Lower leg skin (tissue), 4 donors: ENCODE measurements at regions of chr15 and their contacts with region 1.

Region 1: GRCh38 chr15:22855791-22856190 is 17.3 kb downstream of the NIPA2 start:
- DNase-seq: no peak
- H3K4me3 ChIP-seq: no peak overlapping the region
- CTCF ChIP-seq: no peak
- POLR2A ChIP-seq: no peak

Region 2: DNA sequence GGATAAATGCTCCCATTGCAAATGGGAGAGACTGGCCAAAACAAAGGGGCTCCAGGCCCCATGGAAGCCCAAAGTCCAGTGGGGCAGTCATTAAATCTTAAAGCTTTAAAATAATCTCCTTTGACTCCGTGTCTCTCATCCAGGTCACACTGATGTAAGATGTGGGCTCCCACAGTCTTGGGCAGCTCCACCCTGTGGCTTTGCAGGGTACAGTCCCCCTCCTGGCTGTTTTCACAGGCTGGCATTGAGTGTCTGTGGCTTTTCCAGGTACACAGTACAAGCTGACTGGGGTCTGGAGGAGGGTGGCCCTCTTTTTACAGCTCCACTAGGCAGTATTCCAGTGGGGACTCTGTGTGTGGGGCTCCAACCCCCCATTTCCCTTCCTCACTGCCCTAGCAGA is 28.6 kb after region 1 on chr15:
- intact Hi-C with region 1: no loop called
- DNase-seq: no peak
- H3K4me3 ChIP-seq: no peak overlapping the region
- CTCF ChIP-seq: no peak
- POLR2A ChIP-seq: no peak

Region 3: DNA sequence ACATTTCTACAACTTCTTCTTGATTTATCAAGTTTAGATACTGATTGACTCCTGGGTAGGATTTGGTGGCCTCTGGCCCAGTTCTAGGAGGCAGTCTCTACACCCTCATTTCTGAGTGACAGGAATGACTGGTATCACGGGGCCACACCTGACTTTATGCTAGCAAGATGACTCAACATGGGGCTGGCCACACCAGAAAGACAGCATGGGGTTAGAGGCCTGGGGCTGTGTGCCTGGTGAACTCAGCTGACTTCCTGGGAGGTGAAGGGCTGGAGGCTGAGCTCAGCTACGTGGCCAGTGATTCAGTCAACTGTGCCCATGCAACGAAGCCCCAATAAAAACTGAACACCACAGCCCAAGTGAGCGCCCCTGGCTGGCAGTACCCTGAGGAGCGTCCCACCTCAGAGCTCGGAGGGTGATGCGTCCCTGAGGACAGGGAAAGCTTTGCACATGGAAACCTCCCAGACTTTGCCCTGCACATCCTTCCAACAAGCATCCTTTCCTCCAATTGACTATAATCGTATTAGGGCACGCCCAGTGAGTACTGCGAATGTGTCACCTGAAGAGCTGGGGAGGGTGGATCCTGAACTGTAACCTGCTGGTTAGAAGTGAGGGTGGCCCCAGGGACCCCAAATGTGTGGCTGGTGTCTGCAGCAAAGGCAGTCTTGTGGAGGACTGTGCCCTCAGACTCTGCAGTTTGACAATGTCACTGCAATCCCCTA is 39.8 kb after region 1 on chr15:
- intact Hi-C with region 1: loop called (anchors 1 kb)
- DNase-seq: peak in 1 of 2 donors; percentile 41
- H3K4me3 ChIP-seq: no peak overlapping the region
- CTCF ChIP-seq: no peak
- POLR2A ChIP-seq: no peak

Region 4: DNA sequence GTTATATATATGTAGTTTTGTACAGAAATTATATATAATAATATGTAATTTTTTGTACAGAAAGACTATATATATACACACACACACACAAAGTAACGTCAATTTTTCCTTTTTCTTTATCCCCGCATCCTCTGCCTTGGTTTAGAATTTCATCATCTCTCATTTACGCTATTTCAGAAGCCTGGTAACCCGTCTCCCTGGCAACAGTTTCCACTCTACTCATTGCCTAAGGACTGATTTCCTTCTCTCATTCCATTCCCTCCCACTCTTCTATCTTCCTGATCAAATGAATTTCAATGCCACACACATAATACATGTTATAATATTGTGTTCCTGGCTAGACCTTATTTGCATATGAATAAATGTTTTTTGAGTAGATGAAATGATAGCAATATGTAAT is 879.1 kb after region 1 on chr15:
- intact Hi-C with region 1: no loop called
- DNase-seq: no peak
- H3K4me3 ChIP-seq: no peak overlapping the region
- CTCF ChIP-seq: no peak
- POLR2A ChIP-seq: no peak